ENCODE measurements at regions of chr4 and their contacts with region 1.

Region 1: GRCh38 chr4:94406668-94407437 is 44.9 kb upstream of the PDLIM5 start:
- DNase-seq: peak; percentile 76 to 80
- ATAC-seq: peak; percentile 78
- H3K4me3 ChIP-seq: peak overlapping the region; percentile 43 to 48
- H3K27ac ChIP-seq: peak overlapping the region in 1 of 2 donors; percentile 5
- H3K4me1 ChIP-seq: peaks cover 3 to 5% of the 10 kb centered on the region in 2 donors
- H3K27me3 ChIP-seq: no peaks in the 10 kb centered on the region

Region 2: GRCh38 chr4:94304365-94304971 is 102.4 kb before region 1 on chr4:
- intact Hi-C with region 1: loop called in 1 of 2 experiments (anchors 10 kb)
- DNase-seq: no peak
- ATAC-seq: no peak
- H3K4me3 ChIP-seq: no peak overlapping the region
- H3K27ac ChIP-seq: no peak overlapping the region
- H3K4me1 ChIP-seq: no peaks in the 10 kb centered on the region
- H3K27me3 ChIP-seq: no peaks in the 10 kb centered on the region

Region 3: DNA sequence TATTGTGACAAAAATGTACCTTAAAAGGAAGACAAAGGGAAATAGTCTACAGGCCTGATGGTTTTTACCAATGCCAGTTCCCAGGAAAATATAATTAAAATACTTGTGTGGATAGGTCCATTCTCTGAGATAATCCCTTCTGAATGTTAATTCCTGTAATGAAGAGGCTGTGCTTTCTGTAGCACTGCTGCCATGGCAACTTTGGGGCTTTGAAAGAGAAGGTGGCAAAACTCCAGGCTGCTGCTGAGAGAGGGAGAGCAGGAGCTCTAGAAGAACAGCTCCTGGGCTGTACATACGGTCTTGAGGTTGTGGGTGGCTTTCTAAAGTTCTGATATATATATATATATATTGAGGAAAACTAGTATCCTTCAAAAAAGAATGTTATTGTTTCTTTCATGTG is 170.3 kb after region 1 on chr4:
- intact Hi-C with region 1: loop called in 1 of 2 experiments (anchors 5 kb)
- DNase-seq: peak in 1 of 2 donors; percentile 59
- ATAC-seq: peak; percentile 70
- H3K4me3 ChIP-seq: no peak overlapping the region
- H3K27ac ChIP-seq: no peak overlapping the region
- H3K4me1 ChIP-seq: no peaks in the 10 kb centered on the region
- H3K27me3 ChIP-seq: no peaks in the 10 kb centered on the region

Region 4: GRCh38 chr4:94595879-94596483 is 189.1 kb after region 1 on chr4:
- intact Hi-C with region 1: loop called (anchors 5 kb)
- DNase-seq: no peak
- ATAC-seq: peak; percentile 77
- H3K4me3 ChIP-seq: no peak overlapping the region
- H3K27ac ChIP-seq: no peak overlapping the region
- H3K4me1 ChIP-seq: peaks cover 1 to 5% of the 10 kb centered on the region in 2 donors
- H3K27me3 ChIP-seq: no peaks in the 10 kb centered on the region

Region 5: GRCh38 chr4:94641702-94642560 is 235.1 kb after region 1 on chr4:
- intact Hi-C with region 1: no loop called
- DNase-seq: no peak
- ATAC-seq: no peak
- H3K4me3 ChIP-seq: no peak overlapping the region
- H3K27ac ChIP-seq: peak overlapping the region in 1 of 2 donors; percentile 67
- H3K4me1 ChIP-seq: no peaks in the 10 kb centered on the region
- H3K27me3 ChIP-seq: no peaks in the 10 kb centered on the region

Region 6: GRCh38 chr4:94732358-94732698 is 325.5 kb after region 1 on chr4:
- intact Hi-C with region 1: loop called in 1 of 2 experiments (anchors 10 kb)
- DNase-seq: no peak
- ATAC-seq: no peak
- H3K4me3 ChIP-seq: no peak overlapping the region
- H3K27ac ChIP-seq: no peak overlapping the region
- H3K4me1 ChIP-seq: no peaks in the 10 kb centered on the region
- H3K27me3 ChIP-seq: no peaks in the 10 kb centered on the region

Region 7: DNA sequence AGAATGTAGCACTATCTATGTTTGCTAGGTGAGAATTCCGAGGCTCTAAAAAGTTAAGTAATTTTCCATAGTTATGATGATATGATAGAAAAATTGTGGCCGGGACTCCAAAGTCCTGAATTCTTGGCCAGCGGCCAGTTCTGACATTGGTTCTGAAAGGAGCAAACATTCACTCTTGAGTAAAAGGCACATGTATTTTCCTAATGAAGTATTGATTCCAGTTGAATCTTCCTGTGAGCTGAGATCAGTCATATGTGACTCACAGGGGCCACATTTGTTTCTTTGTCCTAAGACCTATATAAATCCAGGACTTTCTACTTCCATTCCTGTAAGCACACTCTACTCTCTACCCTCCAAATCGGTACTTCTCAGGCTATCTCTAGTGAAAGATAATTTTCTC is 700.8 kb after region 1 on chr4:
- intact Hi-C with region 1: loop called in 1 of 2 experiments (anchors 10 kb)
- DNase-seq: peak in 1 of 2 donors; percentile 84
- ATAC-seq: no peak
- H3K4me3 ChIP-seq: no peak overlapping the region
- H3K27ac ChIP-seq: no peak overlapping the region
- H3K4me1 ChIP-seq: peaks cover 0 to 2% of the 10 kb centered on the region in 2 donors
- H3K27me3 ChIP-seq: no peaks in the 10 kb centered on the region

Measured in aorta (tissue), 5 donors.